K562 (cell line): ENCODE measurements at regions of chr6 and their contacts with region 1.

Region 1: DNA sequence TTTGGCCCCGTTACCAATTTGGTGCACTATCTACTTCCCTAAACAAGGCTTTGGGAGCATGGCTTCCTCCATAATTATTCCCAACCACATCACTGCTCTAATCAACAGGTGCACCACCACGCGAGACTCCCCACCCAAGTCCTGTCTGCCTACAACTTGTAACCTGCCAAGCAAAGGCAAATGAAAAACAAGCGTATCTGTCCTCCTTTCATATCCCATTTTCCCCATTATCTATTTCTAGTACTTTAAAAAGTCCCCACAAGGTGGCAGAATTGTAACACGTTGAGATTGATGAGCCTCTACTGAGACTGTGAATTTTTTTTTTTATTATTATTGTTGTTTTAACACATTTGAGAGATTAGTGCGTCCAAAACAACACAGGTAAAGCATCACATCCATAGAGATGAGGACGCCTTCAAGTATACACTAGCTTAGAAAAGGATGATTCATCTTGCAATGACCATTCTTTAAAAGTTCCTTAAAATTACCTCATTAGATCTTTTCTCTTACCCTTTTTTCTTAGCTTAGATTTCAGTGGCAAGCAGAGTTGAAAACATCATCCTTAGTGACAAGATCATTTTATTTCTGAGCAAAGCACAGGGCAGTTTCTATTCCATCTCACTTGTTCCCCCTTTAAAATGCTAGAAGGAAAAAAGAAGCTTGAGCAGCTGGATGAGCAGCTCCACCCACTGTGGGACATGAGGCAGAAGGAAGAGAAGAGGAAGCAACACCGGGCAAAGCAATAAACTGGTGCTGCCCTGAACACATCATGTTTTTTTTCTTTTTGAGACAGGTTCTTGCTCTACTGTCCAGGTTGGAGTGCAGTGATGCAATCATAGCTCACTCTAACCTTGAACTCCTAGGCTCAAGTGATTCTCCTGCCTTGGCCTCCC is 210.8 kb downstream of the ARHGAP18 start:
- DNase-seq: peak; percentile 31 to 72 (median 40)
- ATAC-seq: peak; percentile 71
- H3K4me3 ChIP-seq: no peak overlapping the region
- H3K27ac ChIP-seq: no peak overlapping the region
- H3K4me1 ChIP-seq: peaks cover 2 to 19% of the 10 kb centered on the region in 2 experiments; a peak in 2 of 5 replicates
- H3K27me3 ChIP-seq: no peaks in the 10 kb centered on the region
- CTCF ChIP-seq: peak; percentile 55 to 83 (median 59); a peak in 4 of 6 replicates
- EP300 ChIP-seq: no peak
- POLR2A ChIP-seq: no peak
- RAD21 ChIP-seq: peak; percentile 90 to 92

Region 2: GRCh38 chr6:129239825-129240491 is 259.2 kb before region 1 on chr6:
- CTCF ChIA-PET with region 1: no interaction called
- POLR2A ChIA-PET with region 1: no interaction called
- in situ Hi-C with region 1: no loop called
- intact Hi-C with region 1: no loop called
- DNase-seq: no peak
- ATAC-seq: no peak
- H3K4me3 ChIP-seq: no peak overlapping the region
- H3K27ac ChIP-seq: no peak overlapping the region
- H3K4me1 ChIP-seq: no peaks in the 10 kb centered on the region
- H3K27me3 ChIP-seq: no peaks in the 10 kb centered on the region
- CTCF ChIP-seq: no peak
- EP300 ChIP-seq: no peak
- POLR2A ChIP-seq: no peak
- RAD21 ChIP-seq: no peak

Region 3: GRCh38 chr6:129567374-129567773 is 68.2 kb after region 1 on chr6:
- CTCF ChIA-PET with region 1: interaction called, 17 read pairs
- POLR2A ChIA-PET with region 1: interaction called, 8 read pairs
- in situ Hi-C with region 1: loop called (anchors 5 kb)
- intact Hi-C with region 1: loop called (anchors 1 kb)
- DNase-seq: peak; percentile 28 to 58 (median 34)
- ATAC-seq: peak; percentile 91
- H3K4me3 ChIP-seq: no peak overlapping the region
- H3K27ac ChIP-seq: no peak overlapping the region
- H3K4me1 ChIP-seq: peaks cover 0 to 7% of the 10 kb centered on the region in 2 experiments; a peak in 2 of 5 replicates
- H3K27me3 ChIP-seq: no peaks in the 10 kb centered on the region
- CTCF ChIP-seq: peak; percentile 40 to 71 (median 68); a peak in 5 of 6 replicates
- EP300 ChIP-seq: no peak
- POLR2A ChIP-seq: no peak
- RAD21 ChIP-seq: peak; percentile 66 to 81

Region 4: GRCh38 chr6:129661536-129662405 is 162.6 kb after region 1 on chr6:
- CTCF ChIA-PET with region 1: no interaction called
- POLR2A ChIA-PET with region 1: no interaction called
- in situ Hi-C with region 1: no loop called
- intact Hi-C with region 1: loop called (anchors 5 kb)
- DNase-seq: no peak
- ATAC-seq: no peak
- H3K4me3 ChIP-seq: no peak overlapping the region
- H3K27ac ChIP-seq: no peak overlapping the region
- H3K4me1 ChIP-seq: peaks cover 12 to 46% of the 10 kb centered on the region in 2 experiments; a peak in 4 of 5 replicates
- H3K27me3 ChIP-seq: no peaks in the 10 kb centered on the region
- CTCF ChIP-seq: no peak
- EP300 ChIP-seq: no peak
- POLR2A ChIP-seq: no peak
- RAD21 ChIP-seq: no peak

Region 5: DNA sequence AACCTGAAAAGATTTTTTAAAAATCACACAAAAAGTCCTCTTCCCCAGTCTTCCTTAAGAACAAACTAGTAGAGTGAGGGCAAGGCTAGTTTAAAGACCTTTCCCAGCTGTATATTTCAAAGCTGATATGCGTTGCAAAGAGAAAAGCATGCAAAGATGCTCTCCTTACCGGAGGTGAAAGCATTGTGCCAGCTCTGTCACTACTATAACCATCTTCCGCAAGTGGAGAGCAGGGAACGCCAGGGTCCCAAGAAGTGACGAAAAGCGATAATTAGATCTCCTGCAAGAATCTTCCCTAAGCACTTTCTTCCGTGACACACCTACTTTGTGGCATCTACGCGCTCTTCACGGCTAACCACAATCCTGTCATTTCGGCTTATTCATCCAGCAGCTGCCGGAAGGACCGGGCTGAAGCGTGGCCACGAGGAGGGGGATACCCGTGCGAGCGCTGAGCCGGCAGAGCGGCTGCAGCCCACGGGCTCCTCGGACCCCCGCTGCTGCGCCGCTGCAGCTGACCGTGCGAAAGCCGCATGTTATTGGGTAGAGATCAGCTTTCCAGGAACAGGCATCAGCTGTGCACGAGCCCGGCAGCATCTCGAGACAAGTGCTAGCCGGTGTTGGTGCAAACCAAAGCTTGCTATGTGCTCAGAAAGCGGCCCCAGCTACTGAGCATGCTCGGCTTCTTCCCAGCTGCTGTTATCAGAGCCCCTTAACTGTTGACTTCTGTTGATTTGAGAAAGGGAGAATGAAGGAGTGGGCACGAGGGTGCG is 267.9 kb after region 1 on chr6:
- CTCF ChIA-PET with region 1: no interaction called
- POLR2A ChIA-PET with region 1: interaction called, 3 read pairs
- in situ Hi-C with region 1: loop called (anchors 10 kb)
- intact Hi-C with region 1: no loop called
- DNase-seq: peak; percentile 25 to 71 (median 37)
- ATAC-seq: peak; percentile 88
- H3K4me3 ChIP-seq: peak overlapping the region; percentile 42
- H3K27ac ChIP-seq: no peak overlapping the region
- H3K4me1 ChIP-seq: peaks cover 6 to 17% of the 10 kb centered on the region in 2 experiments; a peak in 4 of 5 replicates
- H3K27me3 ChIP-seq: no peaks in the 10 kb centered on the region
- CTCF ChIP-seq: no peak
- EP300 ChIP-seq: no peak
- POLR2A ChIP-seq: no peak
- RAD21 ChIP-seq: no peak

Region 6: DNA sequence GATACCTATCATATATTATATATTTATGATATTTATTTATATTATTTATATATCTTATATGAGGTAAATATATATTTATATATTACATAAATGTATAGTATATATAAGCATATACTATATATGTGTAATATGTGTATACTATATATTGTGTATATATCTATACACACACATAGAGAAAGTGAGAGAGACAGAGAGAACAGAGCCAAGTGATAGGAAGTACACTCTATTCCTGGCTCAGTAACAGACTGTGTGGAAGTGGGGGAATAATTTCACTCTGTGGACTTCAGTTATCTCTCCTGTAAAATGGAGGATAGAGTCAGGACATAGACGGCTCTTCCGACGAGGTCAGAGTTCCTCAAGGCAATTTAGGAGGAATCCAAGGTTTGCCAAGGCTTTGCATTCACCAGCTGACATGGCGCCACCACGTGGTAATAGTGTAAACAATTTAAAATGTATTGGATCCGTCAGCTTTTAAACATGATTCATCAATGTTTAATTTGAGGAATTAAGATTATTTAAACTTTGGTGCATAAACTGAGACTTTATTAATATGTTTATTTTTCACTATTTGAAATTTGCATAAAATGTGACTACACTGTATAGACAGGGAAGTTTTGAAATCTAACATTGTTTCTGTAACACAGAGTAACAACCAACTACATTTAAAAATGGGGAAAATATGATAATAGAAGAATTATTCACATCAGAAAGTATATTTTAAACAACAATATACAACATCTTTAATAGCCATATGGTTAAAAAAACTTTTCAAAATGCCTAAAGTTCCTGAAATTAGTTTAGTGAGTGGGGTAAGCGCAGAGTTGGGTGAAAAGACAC is 437.4 kb after region 1 on chr6:
- CTCF ChIA-PET with region 1: interaction called, 9 read pairs
- POLR2A ChIA-PET with region 1: no interaction called
- in situ Hi-C with region 1: no loop called
- intact Hi-C with region 1: loop called (anchors 1 kb)
- DNase-seq: peak; percentile 17 to 83 (median 24)
- ATAC-seq: peak; percentile 92
- H3K4me3 ChIP-seq: no peak overlapping the region
- H3K27ac ChIP-seq: no peak overlapping the region
- H3K4me1 ChIP-seq: no peaks in the 10 kb centered on the region; a peak in 1 of 5 replicates
- H3K27me3 ChIP-seq: no peaks in the 10 kb centered on the region; a peak in 1 of 5 replicates
- CTCF ChIP-seq: peak; percentile 64 to 78 (median 72)
- EP300 ChIP-seq: no peak
- POLR2A ChIP-seq: no peak
- RAD21 ChIP-seq: peak; percentile 77 to 82